Common myeloid progenitor, CD34-positive (primary cell): ENCODE measurements at regions of chr3 and their contacts with region 1.

Region 1: GRCh38 chr3:58419780-58420507 is 13.7 kb downstream of the PDHB start:
- DNase-seq: no peak
- H3K4me3 ChIP-seq: no peak overlapping the region
- H3K27ac ChIP-seq: no peak overlapping the region
- H3K4me1 ChIP-seq: peaks cover 0 to 12% (median 5%) of the 10 kb centered on the region in 4 experiments
- H3K27me3 ChIP-seq: no peaks in the 10 kb centered on the region

Region 2: DNA sequence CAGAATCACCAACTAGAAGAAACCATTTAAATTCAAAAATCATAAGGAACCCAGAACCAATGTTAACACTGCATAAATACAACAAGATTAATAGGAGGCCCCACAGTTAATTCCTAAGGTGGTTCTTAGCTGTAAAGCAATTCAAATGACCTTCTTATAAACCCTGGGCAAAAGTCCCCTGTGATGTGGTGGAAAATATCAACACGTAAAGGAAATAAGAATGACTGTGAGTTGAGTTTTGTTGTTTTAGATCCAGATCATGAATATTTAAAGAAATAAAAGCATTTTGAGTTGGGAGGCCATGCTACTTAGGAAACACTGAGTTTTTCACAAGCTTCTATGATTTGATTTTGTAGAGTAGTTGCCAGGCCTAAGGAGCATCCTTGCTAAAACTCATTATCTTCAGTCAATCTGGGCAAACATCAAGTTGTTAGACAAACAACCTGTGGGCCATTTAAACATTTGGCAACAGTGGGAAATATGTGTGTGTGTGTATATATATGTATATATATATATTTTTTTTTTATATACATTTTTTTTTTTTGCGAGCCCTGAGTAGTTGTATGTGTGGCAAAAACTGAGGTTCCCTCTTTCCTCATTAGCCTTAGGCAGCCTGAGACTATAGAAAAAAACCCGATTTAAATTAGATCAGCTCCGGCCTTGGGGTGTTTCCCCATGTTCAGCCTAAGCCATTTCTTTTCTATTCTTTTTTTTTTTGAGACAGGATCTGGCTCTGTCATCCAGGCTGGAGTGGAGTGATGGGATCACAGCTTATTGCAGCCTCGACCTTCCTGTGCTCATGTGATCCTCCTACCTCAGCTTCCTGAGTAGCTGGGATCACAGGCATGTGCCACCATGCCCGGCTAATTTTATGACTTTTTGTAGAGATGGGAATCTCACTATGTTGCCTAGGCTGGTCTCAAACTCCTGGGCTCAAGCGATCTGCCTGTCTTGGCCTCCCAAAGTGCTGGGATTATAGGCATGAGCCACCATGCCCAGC is 95.3 kb before region 1 on chr3:
- CTCF ChIA-PET with region 1: interaction called, 72 read pairs
- POLR2A ChIA-PET with region 1: no interaction called
- DNase-seq: no peak
- H3K4me3 ChIP-seq: no peak overlapping the region
- H3K27ac ChIP-seq: no peak overlapping the region
- H3K4me1 ChIP-seq: peaks cover 0 to 5% (median under 1%) of the 10 kb centered on the region in 4 experiments
- H3K27me3 ChIP-seq: no peaks in the 10 kb centered on the region

Region 3: DNA sequence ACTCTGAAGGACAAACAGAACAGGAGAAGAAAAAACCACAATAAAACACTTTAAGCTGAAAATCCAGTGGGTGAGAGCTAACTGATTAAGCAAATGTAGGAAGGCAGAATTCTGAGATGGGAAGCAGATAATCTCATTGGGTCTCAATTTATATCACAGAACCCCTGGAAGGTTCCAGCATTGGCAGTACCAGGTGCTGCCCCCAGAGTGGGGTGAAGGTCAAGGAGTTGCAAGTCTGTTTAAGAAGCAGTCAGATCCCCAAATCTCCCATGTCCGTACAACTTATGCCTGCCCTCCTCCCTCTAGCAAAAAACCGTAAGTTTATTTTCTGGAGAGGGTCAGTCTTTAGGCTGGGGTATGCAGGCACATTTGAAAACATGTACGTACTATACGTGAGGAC is 42.2 kb before region 1 on chr3:
- CTCF ChIA-PET with region 1: no interaction called
- POLR2A ChIA-PET with region 1: no interaction called
- DNase-seq: peak in 1 of 3 donors; percentile 5
- H3K4me3 ChIP-seq: no peak overlapping the region
- H3K27ac ChIP-seq: no peak overlapping the region
- H3K4me1 ChIP-seq: peaks cover 0 to 5% (median 0%) of the 10 kb centered on the region in 4 experiments
- H3K27me3 ChIP-seq: no peaks in the 10 kb centered on the region